CD8-positive, alpha-beta T cell (primary cell): ENCODE measurements at regions of chr4 and their contacts with region 1.

Region 1: GRCh38 chr4:36310793-36311192 is 29.4 kb downstream of the DTHD1 start:
- DNase-seq: peak in 3 of 9 experiments; percentile 20 to 51 (median 23)
- ATAC-seq: peak; percentile 46
- H3K4me3 ChIP-seq: no peak overlapping the region
- H3K4me3 Mint-ChIP-seq: peak overlapping the region; percentile 62
- H3K27ac ChIP-seq: peak overlapping the region in 1 of 2 experiments; percentile 23
- H3K27ac Mint-ChIP-seq: no peak overlapping the region
- H3K4me1 ChIP-seq: peaks cover 12% of the 10 kb centered on the region
- H3K4me1 Mint-ChIP-seq: peaks cover 18% of the 10 kb centered on the region
- H3K27me3 ChIP-seq: no peaks in the 10 kb centered on the region
- H3K27me3 Mint-ChIP-seq: no peaks in the 10 kb centered on the region
- CTCF ChIP-seq: no peak

Region 2: DNA sequence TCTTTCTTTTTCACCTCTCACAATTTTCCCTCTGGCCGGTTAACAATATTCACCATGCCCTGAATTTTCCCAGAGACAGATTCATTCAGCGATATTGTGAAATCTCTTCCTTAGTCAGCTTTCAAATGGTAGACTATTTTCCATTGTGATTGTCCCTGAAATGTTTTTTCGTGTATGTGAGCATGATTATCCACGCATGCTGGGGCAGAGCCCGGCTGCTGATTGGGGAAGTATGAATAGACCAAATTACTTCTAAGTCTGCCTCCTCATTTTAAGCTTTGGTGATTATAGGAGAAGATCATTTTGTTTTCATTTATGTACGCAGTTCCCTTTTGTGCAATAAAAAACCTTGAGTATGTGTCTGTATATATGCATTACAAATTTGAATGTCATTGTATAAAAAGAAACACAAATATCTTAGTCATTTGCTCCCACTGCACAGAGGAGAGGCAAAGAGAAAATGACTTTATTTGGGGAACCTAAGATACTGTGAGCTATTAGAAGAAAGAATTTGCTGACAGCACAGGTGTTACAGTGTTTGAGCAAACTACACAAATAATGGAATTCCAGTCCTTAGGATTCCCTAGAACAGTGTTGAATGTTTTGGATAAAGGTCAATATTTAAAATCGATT is 18.1 kb before region 1 on chr4:
- CTCF ChIA-PET with region 1: no interaction called
- POLR2A ChIA-PET with region 1: no interaction called
- intact Hi-C with region 1: loop called in 1 of 2 experiments (anchors 2 kb)
- DNase-seq: no peak
- ATAC-seq: no peak
- H3K4me3 ChIP-seq: no peak overlapping the region
- H3K4me3 Mint-ChIP-seq: no peak overlapping the region
- H3K27ac ChIP-seq: no peak overlapping the region
- H3K27ac Mint-ChIP-seq: no peak overlapping the region
- H3K4me1 ChIP-seq: no peaks in the 10 kb centered on the region
- H3K4me1 Mint-ChIP-seq: peaks cover 17% of the 10 kb centered on the region
- H3K27me3 ChIP-seq: no peaks in the 10 kb centered on the region
- H3K27me3 Mint-ChIP-seq: no peaks in the 10 kb centered on the region
- CTCF ChIP-seq: no peak